MCF 10A (cell line): ENCODE measurements at regions of chr2 and their contacts with region 1.

Region 1: DNA sequence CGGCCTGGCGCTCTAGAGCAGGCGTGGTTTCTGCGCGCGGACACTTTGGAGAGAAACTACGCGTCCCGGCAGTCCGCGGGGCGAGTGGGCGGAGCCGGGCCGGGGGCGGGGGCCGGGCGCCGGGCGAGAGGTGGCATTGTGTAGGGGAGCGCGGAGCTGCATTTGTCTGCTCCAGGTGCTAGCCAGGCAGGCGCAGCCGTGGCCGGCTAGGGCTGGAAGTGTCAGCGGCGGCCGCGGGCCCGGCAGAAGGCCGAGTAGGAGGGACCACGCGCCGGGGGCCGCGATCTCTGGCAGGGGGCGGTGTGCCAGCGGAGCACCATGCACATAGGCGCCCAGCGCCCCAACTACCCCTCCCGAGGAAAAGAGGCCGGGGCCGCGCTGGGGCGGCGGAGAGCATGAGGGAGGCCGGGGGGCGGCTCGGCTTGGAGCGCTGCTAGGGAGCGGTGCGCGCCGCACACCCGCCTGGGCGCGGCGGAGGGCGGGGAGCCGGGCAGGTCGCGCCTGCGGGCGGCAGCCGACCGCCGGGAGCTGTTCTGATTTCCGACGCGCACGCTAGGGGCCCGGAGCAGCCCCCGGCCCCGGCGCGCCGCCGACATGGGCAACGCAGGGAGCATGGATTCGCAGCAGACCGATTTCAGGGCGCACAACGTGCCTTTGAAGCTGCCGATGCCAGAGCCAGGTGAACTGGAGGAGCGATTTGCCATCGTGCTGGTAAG is at the start of gene FMNL2:
- DNase-seq: peak; percentile 82
- H3K4me3 Mint-ChIP-seq: peak within 1 kb of the TSS; percentile 94
- H3K27ac Mint-ChIP-seq: peak within 1 kb of the TSS; percentile 91
- H3K4me1 Mint-ChIP-seq: peaks cover 34% of the 10 kb centered on the region
- H3K27me3 Mint-ChIP-seq: no peaks in the 10 kb centered on the region
- CTCF ChIP-seq: no peak
- total RNA-seq, gene FMNL2: 72.9 and 76.5 TPM in 2 replicates

Region 2: DNA sequence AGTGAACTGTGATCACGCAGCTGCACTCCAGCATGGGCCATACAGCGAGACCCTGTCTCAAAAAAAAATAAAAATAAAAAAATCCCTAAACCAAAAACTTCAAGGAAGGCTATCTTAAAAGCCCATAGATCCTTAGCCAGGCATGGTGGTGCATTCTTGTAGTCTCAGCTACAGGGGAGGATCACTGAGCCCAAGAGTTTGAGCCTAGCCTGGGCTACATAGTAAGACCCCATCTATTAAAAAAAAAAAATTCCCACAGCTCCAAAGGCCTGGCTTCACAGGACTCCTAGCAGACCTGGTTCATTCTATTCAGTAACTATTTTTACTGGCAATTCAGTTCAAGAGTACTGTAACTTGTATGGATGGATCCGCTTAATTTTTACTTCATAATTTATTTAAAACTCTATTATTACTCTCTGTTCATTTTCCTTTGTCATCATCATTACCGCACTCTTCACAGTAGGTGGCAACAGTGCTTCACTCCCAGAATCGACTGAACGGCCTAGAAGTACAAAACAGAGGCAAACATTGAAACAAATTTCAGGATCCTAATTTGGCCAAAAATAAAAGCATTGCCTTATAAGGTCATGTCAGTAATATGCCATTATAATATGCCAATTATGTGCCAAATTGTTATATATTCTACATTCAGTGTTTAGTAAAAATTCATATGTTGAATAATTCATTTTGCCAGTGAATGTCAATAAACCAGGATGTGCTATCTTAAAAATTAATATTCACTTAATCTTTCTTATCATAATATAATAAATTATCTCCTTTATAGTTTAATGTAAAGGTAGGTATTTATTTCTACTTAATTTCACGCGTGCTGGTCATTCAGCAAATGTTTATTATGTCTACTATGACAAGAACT is 145.3 kb before region 1 on chr2:
- CTCF ChIA-PET with region 1: interaction called, 7 read pairs
- POLR2A ChIA-PET with region 1: interaction called, 3 read pairs
- intact Hi-C with region 1: loop called (anchors 1 kb)
- DNase-seq: peak; percentile 85
- H3K4me3 Mint-ChIP-seq: no peak overlapping the region
- H3K27ac Mint-ChIP-seq: no peak overlapping the region
- H3K4me1 Mint-ChIP-seq: no peaks in the 10 kb centered on the region
- H3K27me3 Mint-ChIP-seq: no peaks in the 10 kb centered on the region
- CTCF ChIP-seq: peak; percentile 84

Region 3: GRCh38 chr2:152415231-152415642 is 80.1 kb after region 1 on chr2:
- CTCF ChIA-PET with region 1: interaction called, 3 read pairs
- POLR2A ChIA-PET with region 1: interaction called, 14 read pairs
- intact Hi-C with region 1: no loop called
- DNase-seq: peak; percentile 56
- H3K4me3 Mint-ChIP-seq: no peak overlapping the region
- H3K27ac Mint-ChIP-seq: peak overlapping the region; percentile 79
- H3K4me1 Mint-ChIP-seq: peaks cover 65% of the 10 kb centered on the region
- H3K27me3 Mint-ChIP-seq: no peaks in the 10 kb centered on the region
- CTCF ChIP-seq: no peak

Region 4: DNA sequence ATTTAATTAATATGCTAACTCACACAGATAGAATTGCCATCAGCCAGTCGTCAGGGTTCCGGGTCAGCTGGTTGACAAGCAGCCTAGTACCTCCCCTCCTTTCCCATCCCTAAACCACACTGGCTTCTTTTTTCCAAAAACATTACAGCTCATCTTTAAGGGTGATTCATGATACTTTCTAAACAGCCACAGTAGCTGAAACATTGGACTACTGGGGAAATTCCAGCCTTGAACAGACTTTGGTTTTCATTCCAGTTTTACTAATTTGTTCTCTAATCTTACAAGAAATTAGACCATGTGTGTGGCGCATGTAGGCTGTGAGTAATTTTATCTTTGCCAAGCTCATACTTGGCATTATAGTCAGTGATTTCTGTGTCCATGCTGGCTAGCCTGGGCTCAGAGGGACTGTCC is 110.6 kb after region 1 on chr2:
- CTCF ChIA-PET with region 1: interaction called, 4 read pairs
- POLR2A ChIA-PET with region 1: interaction called, 23 read pairs
- intact Hi-C with region 1: loop called (anchors 5 kb)
- DNase-seq: peak; percentile 84
- H3K4me3 Mint-ChIP-seq: peak overlapping the region; percentile 29
- H3K27ac Mint-ChIP-seq: peak overlapping the region; percentile 12
- H3K4me1 Mint-ChIP-seq: peaks cover 47% of the 10 kb centered on the region
- H3K27me3 Mint-ChIP-seq: no peaks in the 10 kb centered on the region
- CTCF ChIP-seq: no peak

Region 5: DNA sequence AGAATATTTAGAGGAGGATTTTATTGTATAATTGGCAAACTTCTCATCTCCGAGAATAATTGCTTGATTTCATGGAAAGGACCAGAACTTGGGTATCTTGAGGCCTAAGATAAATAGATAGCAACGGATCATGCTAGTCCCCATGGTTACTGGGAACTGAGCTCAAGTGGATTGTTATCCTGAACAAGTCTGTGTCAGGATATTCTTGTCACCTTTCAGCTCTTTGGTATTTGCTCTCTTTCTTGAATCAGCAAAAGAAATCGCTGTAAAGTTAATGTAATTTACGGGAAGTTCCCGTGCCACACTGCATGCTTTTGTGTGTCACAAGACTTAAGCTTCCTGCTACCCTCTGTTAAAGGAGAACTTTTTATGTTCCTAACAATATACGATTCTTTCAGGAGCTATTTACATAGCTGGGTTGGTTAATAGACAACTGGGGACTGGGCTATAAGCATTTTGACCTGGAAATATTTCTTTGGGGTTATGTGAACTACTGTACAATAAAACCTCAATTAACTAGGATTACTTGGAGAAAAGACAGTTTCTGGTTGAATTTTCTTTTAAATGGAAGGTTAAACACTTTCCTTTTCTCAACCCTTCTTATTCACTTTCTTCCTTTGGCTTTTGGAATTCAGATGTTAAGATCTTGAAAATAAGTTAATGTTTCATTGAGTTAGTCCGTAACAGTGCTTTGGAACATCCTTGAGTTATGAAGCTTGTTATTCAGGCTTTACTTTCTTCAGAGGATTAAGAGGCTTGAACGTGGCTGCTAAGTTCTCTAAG is 151.0 kb after region 1 on chr2:
- CTCF ChIA-PET with region 1: no interaction called
- POLR2A ChIA-PET with region 1: no interaction called
- intact Hi-C with region 1: no loop called
- DNase-seq: no peak
- H3K4me3 Mint-ChIP-seq: no peak overlapping the region
- H3K27ac Mint-ChIP-seq: no peak overlapping the region
- H3K4me1 Mint-ChIP-seq: peaks cover 6% of the 10 kb centered on the region
- H3K27me3 Mint-ChIP-seq: no peaks in the 10 kb centered on the region
- CTCF ChIP-seq: no peak

Region 6: GRCh38 chr2:152573168-152573567 is 238.0 kb after region 1 on chr2:
- CTCF ChIA-PET with region 1: interaction called, 3 read pairs
- POLR2A ChIA-PET with region 1: interaction called, 14 read pairs
- intact Hi-C with region 1: loop called (anchors 5 kb)
- DNase-seq: peak; percentile 69
- H3K4me3 Mint-ChIP-seq: no peak overlapping the region
- H3K27ac Mint-ChIP-seq: peak overlapping the region; percentile 37
- H3K4me1 Mint-ChIP-seq: peaks cover 16% of the 10 kb centered on the region
- H3K27me3 Mint-ChIP-seq: no peaks in the 10 kb centered on the region
- CTCF ChIP-seq: no peak